CD8-positive, alpha-beta T cell (primary cell): ENCODE measurements at regions of chr19 and their contacts with region 1.

Region 1: DNA sequence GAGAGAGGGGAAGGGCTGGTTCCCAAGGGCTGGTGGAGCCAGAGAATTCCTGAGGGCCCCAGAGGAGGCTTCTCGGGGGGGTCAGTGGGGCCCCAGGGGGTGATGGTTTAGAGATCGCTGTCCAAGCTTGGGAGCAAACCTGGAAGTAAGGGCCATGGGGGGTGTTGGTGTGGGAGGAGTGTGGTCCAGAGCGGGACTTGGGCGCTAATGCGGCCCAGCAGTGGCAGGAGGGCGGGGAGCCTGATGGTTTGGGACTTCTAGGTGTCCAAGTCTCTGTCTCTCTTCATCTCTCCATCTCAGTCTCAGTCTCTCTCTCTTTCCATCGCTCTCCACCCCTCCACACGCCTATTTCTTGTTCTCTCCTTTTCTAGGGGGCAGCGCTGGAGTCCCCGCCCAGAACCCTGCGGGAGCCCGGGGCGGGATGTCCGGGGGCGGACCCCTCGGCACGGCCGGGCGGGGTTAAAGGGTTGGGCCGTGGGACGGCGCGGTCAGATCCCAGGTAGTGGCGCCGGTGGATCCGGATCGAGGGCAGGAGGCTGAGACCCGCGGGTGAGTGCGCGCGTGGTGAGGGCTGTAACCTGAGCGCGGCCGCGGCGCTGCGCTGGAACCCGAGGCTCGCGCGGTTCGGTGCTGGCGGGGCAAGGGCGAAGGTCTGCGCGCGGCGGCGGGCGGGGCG is at the start of gene CYP4F22:
- DNase-seq: peak in 6 of 9 experiments; percentile 8 to 57 (median 22)
- ATAC-seq: peak; percentile 34
- H3K4me3 ChIP-seq: peak within 1 kb of the TSS; percentile 44 to 53
- H3K4me3 Mint-ChIP-seq: peak within 1 kb of the TSS; percentile 84
- H3K27ac ChIP-seq: no peak within 1 kb of the TSS
- H3K27ac Mint-ChIP-seq: no peak within 1 kb of the TSS
- H3K4me1 ChIP-seq: peaks cover 20% of the 10 kb centered on the region
- H3K4me1 Mint-ChIP-seq: peaks cover 20% of the 10 kb centered on the region
- H3K27me3 ChIP-seq: no peaks in the 10 kb centered on the region
- H3K27me3 Mint-ChIP-seq: peaks cover 6% of the 10 kb centered on the region
- CTCF ChIP-seq: no peak
- total RNA-seq, gene CYP4F22: 0.36 to 0.46 TPM

Region 2: GRCh38 chr19:15532779-15533521 is 24.8 kb after region 1 on chr19:
- CTCF ChIA-PET with region 1: no interaction called
- POLR2A ChIA-PET with region 1: no interaction called
- intact Hi-C with region 1: loop called in 1 of 2 experiments (anchors 1 kb)
- DNase-seq: peak in 1 of 9 experiments; percentile 33
- ATAC-seq: peak; percentile 34
- H3K4me3 ChIP-seq: no peak overlapping the region
- H3K4me3 Mint-ChIP-seq: no peak overlapping the region
- H3K27ac ChIP-seq: no peak overlapping the region
- H3K27ac Mint-ChIP-seq: no peak overlapping the region
- H3K4me1 ChIP-seq: peaks cover 9% of the 10 kb centered on the region
- H3K4me1 Mint-ChIP-seq: peaks cover 9% of the 10 kb centered on the region
- H3K27me3 ChIP-seq: no peaks in the 10 kb centered on the region
- H3K27me3 Mint-ChIP-seq: peaks cover 5% of the 10 kb centered on the region
- CTCF ChIP-seq: no peak